WTC11 (cell line): ENCODE measurements at regions of chr17 and their contacts with region 1.

Region 1: GRCh38 chr17:36755586-36755985 is 154.2 kb downstream of the MRM1 start:
- DNase-seq: peak; percentile 77
- ATAC-seq: peak; percentile 88
- H3K4me3 Mint-ChIP-seq: no peak overlapping the region
- H3K27ac Mint-ChIP-seq: no peak overlapping the region
- H3K4me1 Mint-ChIP-seq: peaks cover 12% of the 10 kb centered on the region
- H3K27me3 Mint-ChIP-seq: no peaks in the 10 kb centered on the region; the same call in 1 of the 2 replicates
- CTCF ChIP-seq: peak; percentile 33

Region 2: DNA sequence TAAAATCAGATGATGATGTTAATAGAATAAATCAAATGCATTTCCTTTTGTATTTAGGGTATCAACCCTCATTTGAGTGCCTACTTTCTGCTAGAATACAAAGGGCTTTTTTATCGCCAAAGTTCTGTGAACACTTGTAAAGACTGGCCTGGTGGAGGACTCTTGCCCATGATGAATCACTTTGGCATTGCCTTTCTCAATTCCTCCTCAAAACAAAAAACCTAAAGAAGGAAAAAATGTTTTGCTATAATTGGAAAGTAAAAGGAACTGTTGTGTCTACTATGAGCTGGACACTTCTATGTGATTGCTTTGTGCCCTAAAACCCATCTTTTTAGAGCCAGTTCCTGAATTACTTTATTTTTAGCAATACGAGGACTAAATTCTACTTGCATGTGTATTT is 176.9 kb before region 1 on chr17:
- CTCF ChIA-PET with region 1: no interaction called
- POLR2A ChIA-PET with region 1: no interaction called
- DNase-seq: no peak
- ATAC-seq: no peak
- H3K4me3 Mint-ChIP-seq: no peak overlapping the region
- H3K27ac Mint-ChIP-seq: no peak overlapping the region
- H3K4me1 Mint-ChIP-seq: no peaks in the 10 kb centered on the region
- H3K27me3 Mint-ChIP-seq: no peaks in the 10 kb centered on the region
- CTCF ChIP-seq: no peak

Region 3: DNA sequence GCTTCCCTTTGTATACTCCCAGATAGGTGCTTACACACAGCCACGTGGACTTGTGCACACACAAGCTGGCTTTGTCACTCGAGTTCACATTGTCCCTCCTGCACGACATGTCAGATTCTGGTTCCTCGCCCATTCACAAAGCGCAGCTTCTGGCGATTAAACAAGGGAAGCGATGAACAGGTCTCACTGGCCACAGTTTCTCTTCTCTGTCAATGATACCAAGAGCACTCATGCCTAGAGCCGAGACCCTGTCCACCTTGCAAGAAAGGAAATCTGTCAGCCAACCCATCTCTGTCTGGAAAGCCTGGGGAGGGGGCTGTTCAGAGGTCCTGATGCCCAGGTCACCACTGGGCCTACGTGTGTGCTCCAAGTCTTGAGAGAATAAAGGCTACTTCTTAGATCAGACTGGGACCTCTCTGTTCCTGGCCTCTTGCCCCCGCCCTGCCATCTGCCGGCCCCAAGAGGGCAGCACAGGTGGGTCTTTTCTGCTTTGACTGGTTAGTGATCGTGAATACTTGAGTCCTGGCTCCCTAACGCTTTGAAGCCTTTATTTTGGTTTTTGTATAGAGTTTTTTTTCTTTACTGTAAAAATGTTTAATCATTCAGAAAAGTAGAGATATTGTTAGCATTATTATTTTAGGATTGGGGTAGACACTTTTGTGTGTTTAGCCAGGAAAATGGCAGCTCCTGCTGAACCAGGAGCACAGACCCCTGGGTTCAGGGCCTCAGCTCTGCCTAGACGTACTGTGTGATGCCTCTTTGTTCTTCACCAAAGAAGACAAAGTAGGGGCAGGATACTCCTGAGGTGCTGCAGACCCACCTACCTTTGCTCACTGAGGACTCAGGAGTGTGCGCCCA is 49.5 kb before region 1 on chr17:
- CTCF ChIA-PET with region 1: interaction called, 28 read pairs
- POLR2A ChIA-PET with region 1: no interaction called
- DNase-seq: peak; percentile 70
- ATAC-seq: peak; percentile 80
- H3K4me3 Mint-ChIP-seq: no peak overlapping the region
- H3K27ac Mint-ChIP-seq: no peak overlapping the region
- H3K4me1 Mint-ChIP-seq: 0 out of 2 replicates have a peak, but pooled peaks cover 3% of the 10 kb centered on the region
- H3K27me3 Mint-ChIP-seq: peaks cover 44% of the 10 kb centered on the region
- CTCF ChIP-seq: peak; percentile 70

Region 4: DNA sequence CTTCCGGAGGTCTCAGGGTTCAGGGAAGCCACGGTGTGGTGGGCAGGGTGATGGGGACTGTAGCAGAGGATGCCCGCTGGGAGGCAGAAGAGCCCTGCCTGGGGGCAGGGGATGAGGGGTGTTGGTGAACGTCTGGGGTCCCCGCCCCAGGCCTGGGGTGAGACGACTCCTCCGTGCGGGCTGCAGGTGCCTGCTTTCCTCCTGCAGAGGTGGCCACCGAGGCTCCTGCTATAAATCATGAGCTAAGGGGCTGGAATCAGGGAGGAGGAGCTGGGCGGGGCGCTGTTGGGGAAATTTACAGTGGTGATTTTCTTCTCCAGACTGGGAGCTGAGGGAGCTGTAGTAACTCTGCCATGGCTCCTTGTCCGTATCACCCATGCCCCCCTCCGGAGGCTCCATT is 12.8 kb after region 1 on chr17:
- CTCF ChIA-PET with region 1: interaction called, 12 read pairs
- POLR2A ChIA-PET with region 1: no interaction called
- DNase-seq: peak; percentile 48
- ATAC-seq: peak; percentile 77
- H3K4me3 Mint-ChIP-seq: no peak overlapping the region
- H3K27ac Mint-ChIP-seq: no peak overlapping the region
- H3K4me1 Mint-ChIP-seq: peaks cover 43% of the 10 kb centered on the region
- H3K27me3 Mint-ChIP-seq: peaks cover 18% of the 10 kb centered on the region
- CTCF ChIP-seq: no peak